Right ventricle myocardium superior (tissue), 1 donor: ENCODE measurements at regions of chr22 and their contacts with region 1.

Region 1: GRCh38 chr22:46542011-46542985 is 4.9 kb upstream of the CELSR1 start:
- DNase-seq: peak; percentile 79
- ATAC-seq: peak; percentile 76

Region 2: GRCh38 chr22:46355371-46355995 is 186.8 kb before region 1 on chr22:
- intact Hi-C with region 1: loop called (anchors 5 kb)
- DNase-seq: peak; percentile 79
- ATAC-seq: peak; percentile 49

Region 3: DNA sequence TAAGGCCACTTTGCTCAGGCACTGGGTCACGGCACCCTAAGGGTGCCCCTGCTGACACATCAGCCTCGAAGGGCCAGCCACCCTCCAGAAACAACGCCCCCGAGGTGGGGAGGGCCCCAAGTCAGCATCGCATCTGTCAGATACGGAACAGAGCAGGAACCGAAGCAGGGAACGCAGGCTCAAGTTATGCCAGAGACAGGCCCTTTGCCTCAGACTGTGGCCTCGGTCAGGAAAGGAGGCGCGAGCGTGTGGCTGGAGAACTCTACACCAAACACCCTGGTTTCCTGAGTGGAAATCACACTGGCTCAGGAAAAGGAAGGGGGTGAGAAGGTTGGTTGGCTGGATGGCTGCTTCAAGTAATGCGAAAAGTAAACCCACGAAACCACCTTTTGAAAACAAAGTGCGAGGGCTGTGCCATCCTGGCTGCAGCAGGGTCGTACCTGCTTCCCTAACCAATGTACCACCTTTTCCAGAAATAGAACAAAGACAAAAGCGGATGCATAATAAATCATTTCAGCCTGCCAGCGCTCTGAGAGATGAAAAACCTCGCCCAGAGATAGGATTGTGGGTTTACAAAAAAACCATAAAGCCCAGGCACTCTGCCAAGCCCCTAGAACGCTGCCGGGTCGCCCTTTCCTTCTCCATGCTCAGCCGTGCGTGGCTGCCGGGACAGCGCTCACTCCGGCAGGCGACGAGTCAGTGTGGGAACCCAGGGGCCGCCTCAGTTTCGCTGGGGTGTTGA is 168.2 kb before region 1 on chr22:
- intact Hi-C with region 1: loop called (anchors 5 kb)
- DNase-seq: no peak
- ATAC-seq: no peak

Region 4: GRCh38 chr22:46471901-46472721 is 70.2 kb before region 1 on chr22:
- intact Hi-C with region 1: no loop called
- DNase-seq: no peak
- ATAC-seq: no peak